MCF 10A (cell line): ENCODE measurements at regions of chr4 and their contacts with region 1.

Region 1: DNA sequence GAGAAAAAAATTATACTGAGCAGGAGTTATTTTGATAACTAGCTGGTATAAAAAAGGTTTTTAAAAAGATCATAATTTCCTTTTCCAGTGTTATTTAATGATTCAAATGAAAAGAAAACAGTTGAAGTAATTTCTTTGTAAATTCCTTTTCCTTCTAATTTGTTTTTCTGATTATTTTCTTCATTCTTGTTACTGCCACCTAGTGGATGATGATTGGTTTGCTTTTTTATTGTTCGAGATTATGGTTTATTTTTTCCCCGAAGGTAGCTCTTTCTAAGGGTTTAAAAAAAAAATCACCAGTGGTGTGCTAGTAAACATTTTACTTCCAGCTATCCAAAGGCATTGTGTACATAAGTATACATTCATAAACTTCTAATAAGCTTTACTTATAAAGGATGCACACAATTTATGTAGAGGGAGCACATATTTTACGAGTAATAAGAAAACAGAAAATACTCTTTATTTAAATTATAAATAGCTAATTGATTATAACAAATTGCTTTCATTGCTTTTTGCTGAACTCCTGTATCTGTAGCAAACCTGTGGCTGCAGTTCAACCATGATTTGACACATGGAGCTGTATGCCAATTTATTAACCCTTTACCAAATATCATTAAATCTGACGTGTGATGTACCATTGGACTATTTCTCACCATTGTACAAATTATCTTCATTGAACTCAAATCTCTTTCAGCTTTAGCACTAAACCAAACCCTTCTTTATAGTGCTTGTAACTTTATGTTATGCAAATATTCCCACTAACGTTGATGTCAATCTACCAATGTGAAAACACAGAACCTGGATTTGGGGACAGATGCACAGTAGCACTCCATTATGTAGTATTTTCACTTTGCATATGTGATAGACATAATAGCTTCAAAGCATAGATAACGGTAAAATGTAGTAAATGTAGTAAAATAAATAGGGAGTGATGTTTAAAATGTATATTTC is 97.8 kb upstream of the ANK2 start:
- DNase-seq: peak; percentile 21
- H3K4me3 Mint-ChIP-seq: no peak overlapping the region
- H3K27ac Mint-ChIP-seq: no peak overlapping the region
- H3K4me1 Mint-ChIP-seq: no peaks in the 10 kb centered on the region
- H3K27me3 Mint-ChIP-seq: no peaks in the 10 kb centered on the region
- CTCF ChIP-seq: peak; percentile 18

Region 2: GRCh38 chr4:112817933-112818593 is 133.6 kb before region 1 on chr4:
- CTCF ChIA-PET with region 1: interaction called, 11 read pairs
- POLR2A ChIA-PET with region 1: no interaction called
- intact Hi-C with region 1: no loop called
- DNase-seq: peak; percentile 86
- H3K4me3 Mint-ChIP-seq: peak overlapping the region; percentile 86
- H3K27ac Mint-ChIP-seq: peak overlapping the region; percentile 30
- H3K4me1 Mint-ChIP-seq: peaks cover 19% of the 10 kb centered on the region
- H3K27me3 Mint-ChIP-seq: no peaks in the 10 kb centered on the region
- CTCF ChIP-seq: no peak

Region 3: DNA sequence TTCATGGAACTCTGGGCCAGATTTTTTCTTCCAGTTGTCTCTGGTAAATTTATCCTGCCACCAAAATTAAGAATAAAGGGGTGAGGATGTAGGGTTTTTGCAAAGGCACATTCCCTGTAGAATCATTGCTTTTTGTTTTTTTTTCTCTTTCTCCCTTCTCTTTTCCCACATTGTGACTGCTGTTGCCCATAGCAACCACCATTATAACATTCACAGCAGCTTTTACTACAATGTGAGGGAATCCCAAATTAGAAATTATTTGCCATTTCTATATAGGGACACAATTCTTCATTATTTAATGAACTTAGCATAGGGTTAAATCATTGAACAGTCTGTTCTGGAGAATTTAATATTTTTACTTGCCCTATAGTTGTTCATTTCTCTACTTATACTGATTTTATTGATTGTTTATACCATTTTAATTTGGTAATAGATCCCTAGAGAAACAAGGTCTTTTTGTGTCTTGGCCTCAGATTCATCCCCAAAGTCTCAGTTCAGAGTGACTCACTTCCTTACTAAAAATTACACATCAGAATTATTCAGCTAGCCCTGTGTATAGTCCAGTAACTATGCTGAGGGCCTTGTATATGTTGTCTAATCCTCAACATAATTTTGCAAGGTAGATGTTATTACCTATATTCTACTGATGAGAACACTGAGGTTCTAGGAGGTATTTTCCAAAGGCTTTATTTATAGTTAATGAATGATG is 17.0 kb after region 1 on chr4:
- CTCF ChIA-PET with region 1: interaction called, 10 read pairs
- POLR2A ChIA-PET with region 1: interaction called, 3 read pairs
- intact Hi-C with region 1: no loop called
- DNase-seq: no peak
- H3K4me3 Mint-ChIP-seq: no peak overlapping the region
- H3K27ac Mint-ChIP-seq: no peak overlapping the region
- H3K4me1 Mint-ChIP-seq: peaks cover 4% of the 10 kb centered on the region
- H3K27me3 Mint-ChIP-seq: no peaks in the 10 kb centered on the region
- CTCF ChIP-seq: no peak

Region 4: GRCh38 chr4:113094802-113095201 is 143.2 kb after region 1 on chr4:
- CTCF ChIA-PET with region 1: interaction called, 17 read pairs
- POLR2A ChIA-PET with region 1: no interaction called
- intact Hi-C with region 1: loop called (anchors 2 kb)
- DNase-seq: peak; percentile 22
- H3K4me3 Mint-ChIP-seq: no peak overlapping the region
- H3K27ac Mint-ChIP-seq: no peak overlapping the region
- H3K4me1 Mint-ChIP-seq: peaks cover 7% of the 10 kb centered on the region
- H3K27me3 Mint-ChIP-seq: no peaks in the 10 kb centered on the region
- CTCF ChIP-seq: peak; percentile 83